Motor neuron (in vitro differentiated cells): ENCODE measurements at regions of chr3 and their contacts with region 1.

Region 1: GRCh38 chr3:126679318-126679751 is 24.4 kb upstream of the TXNRD3 start:
- ATAC-seq: peak; percentile 88 to 99 (median 95)
- H3K4me3 ChIP-seq: no peak overlapping the region
- H3K27ac ChIP-seq: no peak overlapping the region
- H3K4me1 ChIP-seq: peaks cover 28 to 29% of the 10 kb centered on the region in 2 donors

Region 2: DNA sequence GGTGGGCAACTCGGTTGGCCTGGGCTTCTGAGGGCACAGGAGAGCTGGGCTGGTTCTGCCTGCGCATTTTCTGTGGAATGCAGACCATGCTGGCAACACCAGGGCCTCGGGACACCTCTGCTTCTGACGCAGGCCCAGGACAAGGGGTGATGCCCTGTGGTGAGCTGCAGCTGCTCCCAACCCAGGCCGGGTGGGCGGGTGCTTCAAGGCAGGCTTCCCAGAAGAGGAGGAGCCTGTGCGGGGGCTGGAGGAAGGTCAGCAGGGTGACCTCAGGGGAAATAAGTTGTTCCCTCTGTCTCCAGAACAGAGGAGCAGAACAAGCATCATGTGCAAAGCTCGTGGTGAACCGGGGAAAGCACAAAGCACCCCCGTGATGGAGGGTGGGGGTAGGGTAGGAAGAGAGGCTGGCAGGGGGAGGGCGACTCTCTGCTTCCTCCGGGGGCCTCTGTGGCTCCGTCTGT is 292.6 kb after region 1 on chr3:
- in situ Hi-C with region 1: loop called in 1 of 9 experiments (anchors 10 kb)
- ATAC-seq: peak; percentile 58 to 94 (median 82)
- H3K4me3 ChIP-seq: no peak overlapping the region
- H3K27ac ChIP-seq: no peak overlapping the region
- H3K4me1 ChIP-seq: peaks cover 3 to 8% of the 10 kb centered on the region in 2 donors

Region 3: DNA sequence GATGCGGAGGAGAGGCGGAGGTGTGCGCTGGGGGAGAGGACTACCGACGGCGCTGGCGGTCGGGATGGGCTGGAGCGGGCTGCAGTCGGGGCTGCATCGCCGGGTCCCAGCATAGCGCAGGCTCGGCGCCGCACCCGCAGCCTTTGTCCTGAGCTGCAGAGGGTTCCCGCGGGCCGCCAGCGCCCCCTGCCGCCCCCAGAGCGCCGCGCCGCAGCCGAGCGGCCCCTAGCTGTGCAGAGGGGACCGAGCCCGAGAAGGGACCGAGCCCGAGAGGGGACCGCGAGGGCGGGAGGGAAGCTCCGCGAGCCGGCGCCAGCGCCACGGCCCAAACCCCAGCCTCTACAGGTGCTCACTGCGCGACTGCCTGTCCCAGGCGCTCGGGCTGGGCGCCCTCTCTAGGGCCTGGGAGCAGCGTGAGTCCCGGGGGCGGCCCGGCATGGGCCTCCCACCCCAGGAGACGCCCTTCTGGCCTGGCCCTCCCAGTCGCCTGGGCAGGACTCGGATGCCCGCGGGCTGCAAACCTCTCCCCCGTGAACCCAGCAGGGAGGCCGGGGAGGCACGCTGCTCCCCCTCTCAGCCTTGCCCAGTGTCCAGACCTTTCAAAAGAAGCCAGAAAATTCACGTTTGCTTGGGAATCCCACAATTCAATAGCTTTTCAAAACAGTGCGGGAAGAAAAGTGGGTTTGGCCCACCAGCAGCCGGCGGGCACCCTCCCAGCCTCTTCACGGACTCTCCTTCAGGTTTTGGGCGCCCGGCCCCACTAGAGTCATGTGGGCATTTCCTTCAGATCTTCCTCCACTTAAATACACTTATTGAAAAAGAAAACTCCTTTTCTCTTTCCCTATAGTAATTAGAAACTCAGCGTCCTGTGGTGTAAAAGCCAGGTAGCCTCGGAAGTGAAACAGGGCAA is 776.5 kb after region 1 on chr3:
- in situ Hi-C with region 1: loop called in 1 of 9 experiments (anchors 25 kb)
- ATAC-seq: peak; percentile 92 to 98 (median 93)
- H3K4me3 ChIP-seq: peak overlapping the region in 4 of 5 donors; percentile 1 to 18 (median 6)
- H3K27ac ChIP-seq: no peak overlapping the region
- H3K4me1 ChIP-seq: peaks cover 31 to 47% of the 10 kb centered on the region in 2 donors

Region 4: GRCh38 chr3:127544192-127544802 is 865.0 kb after region 1 on chr3:
- in situ Hi-C with region 1: loop called in 2 of 9 experiments (anchors 25 kb)
- ATAC-seq: peak; percentile 54 to 79 (median 62)
- H3K4me3 ChIP-seq: no peak overlapping the region
- H3K27ac ChIP-seq: peak overlapping the region; percentile 73 to 85
- H3K4me1 ChIP-seq: peaks cover 39 to 50% of the 10 kb centered on the region in 2 donors